WTC11 (cell line): ENCODE measurements at regions of chr6 and their contacts with region 1.

Region 1: DNA sequence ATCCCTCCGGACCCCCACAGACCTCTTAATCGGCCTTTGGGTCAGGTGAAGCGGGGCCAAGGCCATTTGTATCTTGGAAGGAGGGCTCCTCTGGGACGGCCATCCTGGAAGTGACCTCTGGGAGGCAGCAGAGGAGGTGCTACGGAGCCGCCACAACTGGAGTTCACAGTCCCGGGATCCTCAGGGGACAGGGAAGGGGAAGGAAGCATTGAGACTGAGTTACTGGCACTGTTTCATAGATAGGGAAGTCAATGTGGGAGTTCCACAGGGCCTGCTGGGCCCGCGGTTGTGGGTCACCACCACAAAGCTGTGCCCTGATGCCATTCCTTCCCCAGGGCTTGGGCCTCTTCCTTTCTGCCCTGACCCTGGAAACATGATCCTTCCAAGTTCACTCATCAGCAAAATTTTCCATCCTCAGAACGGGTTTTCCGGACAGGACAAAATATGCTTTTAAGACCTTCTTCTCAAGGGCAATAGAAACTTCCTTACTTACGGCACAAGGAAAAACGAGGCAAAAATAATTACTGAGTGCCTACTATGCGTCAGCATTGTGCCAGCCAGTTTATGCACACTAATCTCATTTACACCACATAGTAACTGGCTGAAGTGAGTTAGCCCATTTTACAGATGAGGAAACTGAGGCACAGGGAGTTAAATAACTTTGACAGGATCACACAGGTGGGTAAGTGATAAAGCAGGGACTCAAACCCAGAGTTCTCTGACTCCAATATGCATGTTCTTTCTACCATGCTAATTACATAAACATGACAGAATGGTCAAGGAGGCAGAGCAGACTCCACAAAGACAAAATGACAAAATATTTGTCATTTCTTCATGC is 143.8 kb downstream of the UNC5CL start:
- DNase-seq: peak; percentile 82
- ATAC-seq: peak; percentile 99
- H3K4me3 Mint-ChIP-seq: no peak overlapping the region
- H3K27ac Mint-ChIP-seq: no peak overlapping the region
- H3K4me1 Mint-ChIP-seq: peaks cover 12% of the 10 kb centered on the region
- H3K27me3 Mint-ChIP-seq: peaks cover 47% of the 10 kb centered on the region
- CTCF ChIP-seq: peak; percentile 30; the same call in 1 of the 2 replicates

Region 2: DNA sequence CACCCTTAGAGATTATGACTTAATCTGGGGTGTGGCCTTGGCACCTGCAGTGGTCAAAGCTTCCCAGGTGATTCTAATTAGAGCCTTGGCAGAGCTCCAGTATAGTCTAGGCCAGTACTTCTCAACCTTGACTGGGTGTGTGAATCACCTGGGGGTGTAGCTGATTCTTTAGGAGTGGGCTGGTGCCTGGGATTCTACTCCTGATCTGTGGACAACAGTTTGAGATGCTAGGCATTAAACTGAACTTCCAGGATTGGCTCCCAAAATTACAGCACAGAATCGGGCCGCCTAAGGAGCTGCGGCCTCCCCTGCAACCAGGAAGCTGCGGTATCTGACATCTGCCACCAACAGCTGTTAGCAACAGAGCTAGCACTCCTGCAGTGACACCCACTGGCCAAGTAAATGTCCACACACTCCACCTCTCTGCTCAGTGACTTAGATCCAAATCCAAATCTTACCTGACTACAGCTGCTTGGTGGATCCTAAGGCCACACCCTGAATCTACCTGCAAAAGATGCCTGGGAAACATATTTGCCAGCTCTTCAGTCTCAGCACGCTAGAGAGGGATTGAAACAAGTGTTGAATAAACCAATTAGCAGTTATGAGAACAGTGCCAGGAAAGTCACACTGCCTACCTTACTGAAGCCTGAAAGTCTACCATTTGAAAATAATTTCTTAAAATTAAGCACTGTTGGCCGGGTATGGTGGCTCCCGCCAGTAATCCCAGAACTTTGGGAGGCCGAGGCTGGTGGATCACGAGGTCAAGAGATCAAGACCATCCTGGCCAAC is 17.2 kb after region 1 on chr6:
- CTCF ChIA-PET with region 1: interaction called, 19 read pairs
- POLR2A ChIA-PET with region 1: no interaction called
- DNase-seq: peak; percentile 53
- ATAC-seq: peak; percentile 97
- H3K4me3 Mint-ChIP-seq: no peak overlapping the region
- H3K27ac Mint-ChIP-seq: no peak overlapping the region
- H3K4me1 Mint-ChIP-seq: peaks cover 8% of the 10 kb centered on the region
- H3K27me3 Mint-ChIP-seq: peaks cover 45% of the 10 kb centered on the region
- CTCF ChIP-seq: no peak